ENCODE measurements at regions of chr1 and their contacts with region 1.

Region 1: DNA sequence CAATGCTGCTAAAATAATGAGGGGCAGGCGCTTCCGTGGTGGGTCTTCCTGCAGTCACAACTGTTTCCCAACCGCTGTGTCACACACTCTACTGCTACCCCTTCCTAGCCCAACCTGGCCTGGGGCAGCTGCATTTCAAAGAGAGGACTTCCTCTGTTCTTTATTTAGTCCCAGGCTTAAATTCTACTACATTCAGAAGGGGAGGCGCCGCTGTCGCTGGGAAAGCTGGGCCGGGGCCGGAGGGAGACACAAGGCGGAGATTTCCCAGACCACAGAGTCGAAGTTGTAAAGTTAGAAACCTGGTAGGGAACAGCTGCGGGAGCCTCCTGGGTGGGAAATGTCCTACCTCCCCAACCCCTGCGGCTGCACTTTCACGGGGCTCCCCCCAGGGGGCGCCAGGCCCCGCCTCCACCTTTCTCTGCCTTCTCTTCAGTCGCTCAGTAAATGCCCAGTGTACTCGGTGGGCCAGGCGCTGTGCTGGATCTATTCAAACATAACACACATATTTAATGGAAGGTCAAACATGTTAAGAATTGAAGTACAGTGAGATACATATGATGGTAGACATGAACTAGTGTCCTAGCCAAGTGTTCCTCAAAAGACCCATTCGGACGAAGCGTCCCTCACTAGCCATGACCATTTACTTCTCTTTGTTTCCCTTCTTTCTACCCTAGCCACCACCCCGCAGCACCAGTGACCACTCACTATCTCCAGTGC is 23.1 kb downstream of the DYRK3 start:
- H3K4me3 ChIP-seq: no peak overlapping the region
- H3K27ac ChIP-seq: no peak overlapping the region
- H3K4me1 ChIP-seq: peaks cover 8% of the 10 kb centered on the region
- CTCF ChIP-seq: peak; percentile 64; the same call in 1 of the 2 replicates

Region 2: DNA sequence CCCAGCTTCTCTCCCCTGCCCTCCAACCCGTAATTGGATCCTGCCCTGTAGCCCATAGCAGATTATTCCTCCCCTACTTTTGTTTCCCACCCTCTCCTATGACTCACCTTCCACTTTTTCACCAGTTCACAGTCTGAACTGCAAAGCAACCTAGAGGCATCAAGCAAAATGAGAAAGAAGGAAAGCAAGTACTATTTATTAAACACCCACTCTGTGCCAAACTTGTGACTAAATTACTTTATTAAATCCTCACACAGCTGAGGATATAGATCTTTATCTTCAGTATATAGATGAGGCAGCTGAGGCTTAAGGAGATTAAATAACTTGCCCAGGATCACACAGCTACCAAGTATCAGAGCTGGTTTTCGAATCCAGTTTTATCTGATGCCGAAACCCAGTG is 208.8 kb before region 1 on chr1:
- CTCF ChIA-PET with region 1: no interaction called
- POLR2A ChIA-PET with region 1: no interaction called
- H3K4me3 ChIP-seq: no peak overlapping the region
- H3K27ac ChIP-seq: no peak overlapping the region
- H3K4me1 ChIP-seq: no peaks in the 10 kb centered on the region
- CTCF ChIP-seq: no peak

Region 3: GRCh38 chr1:206489980-206490770 is 168.2 kb before region 1 on chr1:
- CTCF ChIA-PET with region 1: interaction called, 30 read pairs
- POLR2A ChIA-PET with region 1: no interaction called
- H3K4me3 ChIP-seq: no peak overlapping the region
- H3K27ac ChIP-seq: no peak overlapping the region
- H3K4me1 ChIP-seq: 0 out of 2 replicates have a peak, but pooled peaks cover under 1% of the 10 kb centered on the region
- CTCF ChIP-seq: peak; percentile 94

Region 4: DNA sequence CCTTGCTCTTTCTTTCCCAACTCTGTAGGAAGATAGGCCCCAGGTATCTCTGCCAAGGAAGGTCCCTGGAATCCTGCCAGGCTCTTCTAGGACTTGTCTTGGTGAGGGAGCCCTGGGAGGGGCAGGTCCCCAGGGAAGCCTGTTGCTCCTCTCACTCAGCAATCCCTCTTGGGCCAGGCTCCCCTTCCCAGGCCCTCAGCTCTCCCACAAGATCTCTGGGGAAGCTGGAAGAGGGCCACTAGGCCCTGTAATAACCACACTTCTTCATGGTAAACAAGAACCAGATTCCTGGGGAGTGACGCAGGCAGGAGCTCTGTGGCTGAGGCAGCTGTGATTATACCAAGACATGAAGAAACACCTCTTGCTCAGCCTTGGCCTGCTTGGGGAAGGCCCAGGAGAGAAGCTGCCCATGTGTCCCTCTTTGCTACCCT is 16.3 kb after region 1 on chr1:
- CTCF ChIA-PET with region 1: interaction called, 70 read pairs
- POLR2A ChIA-PET with region 1: no interaction called
- H3K4me3 ChIP-seq: no peak overlapping the region
- H3K27ac ChIP-seq: no peak overlapping the region
- H3K4me1 ChIP-seq: no peaks in the 10 kb centered on the region
- CTCF ChIP-seq: no peak

Measured in HEK293 (cell line).